ENCODE measurements at regions of chr6 and their contacts with region 1.

Region 1: DNA sequence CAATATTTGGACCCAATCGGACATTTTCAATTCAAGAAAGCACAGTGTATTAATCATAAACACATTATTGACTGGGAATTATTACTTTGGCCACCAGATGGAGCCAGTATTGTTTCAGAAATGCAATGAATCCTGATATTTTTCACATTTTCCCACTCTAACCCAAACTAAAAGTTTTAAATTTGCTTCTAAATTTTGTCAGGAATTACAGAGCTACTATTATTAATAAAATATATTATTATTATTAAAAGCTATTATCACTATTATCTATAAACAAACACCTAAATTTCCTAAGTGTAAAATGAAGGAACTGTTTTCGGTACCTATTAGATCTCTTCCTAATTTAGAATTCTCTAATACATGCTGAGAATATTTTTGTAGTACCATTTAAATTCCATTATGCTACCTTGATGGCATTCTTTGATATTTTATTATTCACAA is 245.3 kb downstream of the OGFRL1 start:
- DNase-seq: no peak
- H3K4me3 ChIP-seq: no peak overlapping the region
- H3K27ac ChIP-seq: no peak overlapping the region
- H3K4me1 ChIP-seq: no peaks in the 10 kb centered on the region
- H3K27me3 ChIP-seq: no peaks in the 10 kb centered on the region
- CTCF ChIP-seq: peak in 3 of 4 experiments; percentile 38 to 52 (median 44)
- POLR2A ChIP-seq: no peak

Region 2: GRCh38 chr6:71444222-71444621 is 89.7 kb before region 1 on chr6:
- intact Hi-C with region 1: no loop called
- DNase-seq: no peak
- H3K4me3 ChIP-seq: no peak overlapping the region
- H3K27ac ChIP-seq: no peak overlapping the region
- H3K4me1 ChIP-seq: no peaks in the 10 kb centered on the region
- H3K27me3 ChIP-seq: no peaks in the 10 kb centered on the region
- CTCF ChIP-seq: peak in 1 of 4 experiments; percentile 8
- POLR2A ChIP-seq: no peak

Region 3: DNA sequence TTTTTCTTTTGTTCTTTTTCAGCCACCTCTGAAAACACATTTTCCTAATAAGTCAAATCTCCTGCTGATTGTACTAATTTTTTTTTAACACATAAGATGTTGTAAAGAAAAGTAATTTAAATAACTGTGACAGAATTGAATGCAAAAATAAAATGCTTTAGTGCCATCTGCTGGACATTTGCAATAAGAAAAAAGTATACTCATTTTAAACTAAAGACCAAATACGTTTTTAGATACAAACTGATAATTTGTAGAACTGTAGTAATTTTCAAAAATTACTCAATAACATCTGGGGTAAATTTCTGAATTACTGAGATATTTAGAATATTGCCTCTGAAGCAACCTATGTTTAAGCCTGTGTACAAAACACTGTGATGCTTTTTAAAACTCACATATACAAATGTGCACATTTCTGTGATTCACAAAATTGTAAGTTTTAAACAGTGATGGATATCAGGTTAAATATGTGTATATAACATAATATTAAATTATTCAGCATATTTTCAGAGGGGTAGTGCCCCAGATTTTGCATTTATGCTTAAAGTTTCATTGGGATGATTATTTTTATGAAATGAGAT is 551.1 kb after region 1 on chr6:
- intact Hi-C with region 1: loop called (anchors 5 kb)
- DNase-seq: no peak
- H3K4me3 ChIP-seq: no peak overlapping the region
- H3K27ac ChIP-seq: no peak overlapping the region
- H3K4me1 ChIP-seq: no peaks in the 10 kb centered on the region
- H3K27me3 ChIP-seq: no peaks in the 10 kb centered on the region
- CTCF ChIP-seq: peak; percentile 12 to 50 (median 46)
- POLR2A ChIP-seq: no peak